CD4-positive, alpha-beta memory T cell (primary cell): ENCODE measurements at regions of chr5 and their contacts with region 1.

Region 1: DNA sequence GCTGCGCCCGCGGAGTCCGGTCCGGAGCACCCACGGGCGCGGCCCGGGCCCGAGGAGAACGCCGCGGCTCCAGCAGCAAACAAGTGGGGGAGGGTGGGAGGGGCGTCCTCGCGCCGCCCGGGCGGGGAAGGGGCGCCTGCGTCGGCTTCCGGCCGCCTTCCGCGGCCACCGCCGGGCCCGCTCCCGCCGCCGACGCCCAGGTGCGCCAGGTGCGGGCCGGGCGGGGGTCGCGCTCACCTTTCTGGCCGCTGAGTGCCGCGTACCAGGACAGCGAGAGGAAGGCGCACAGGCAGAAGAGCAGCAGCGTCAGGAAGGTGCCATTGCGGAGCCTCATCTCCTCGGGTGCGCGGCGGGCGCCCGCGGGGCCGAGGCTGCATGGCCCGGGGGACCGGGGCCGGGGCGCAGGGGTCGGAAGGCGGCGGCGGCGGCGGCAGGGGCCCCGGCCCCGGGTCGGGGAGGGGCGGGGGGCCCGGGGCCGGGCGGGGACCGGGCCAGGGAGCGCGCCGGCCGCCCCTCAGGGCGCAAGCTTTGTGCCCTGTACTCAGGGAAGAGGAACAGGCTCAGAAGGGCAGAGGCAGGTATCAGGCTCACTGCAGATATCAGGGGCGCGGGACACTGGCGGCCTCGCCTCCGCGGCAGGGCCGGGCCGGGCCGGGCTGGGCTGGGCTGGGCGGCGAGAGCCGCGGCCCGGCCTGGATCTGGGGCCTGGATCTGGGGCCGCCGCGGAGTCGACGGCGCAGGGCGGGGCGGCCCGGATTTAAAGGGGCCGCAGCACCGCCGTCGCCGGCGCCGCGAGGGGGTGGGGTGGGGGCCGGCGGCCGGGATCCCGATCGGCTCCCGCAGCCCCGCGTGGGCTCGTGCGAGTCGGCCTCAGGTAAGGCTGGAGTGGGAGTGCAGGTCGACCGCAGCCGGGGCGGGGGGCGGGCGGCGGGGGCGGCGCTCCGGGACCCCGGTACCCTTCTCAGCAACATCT is at the start of gene MGAT4B:
- DNase-seq: peak; percentile 59 to 68 (median 63)
- H3K4me3 ChIP-seq: peak within 1 kb of the TSS; percentile 11 to 55
- H3K4me3 Mint-ChIP-seq: peak within 1 kb of the TSS; percentile 71 to 87 (median 78)
- H3K27ac ChIP-seq: peak within 1 kb of the TSS; percentile 61
- H3K27ac Mint-ChIP-seq: peak within 1 kb of the TSS in 3 of 7 donors; percentile 59 to 73 (median 60)
- H3K4me1 ChIP-seq: peaks cover 40% of the 10 kb centered on the region
- H3K4me1 Mint-ChIP-seq: peaks cover 14 to 41% (median 30%) of the 10 kb centered on the region in 4 donors
- H3K27me3 ChIP-seq: no peaks in the 10 kb centered on the region
- H3K27me3 Mint-ChIP-seq: no peaks in the 10 kb centered on the region
- total RNA-seq, gene MGAT4B: 119 to 121 TPM

Region 2: DNA sequence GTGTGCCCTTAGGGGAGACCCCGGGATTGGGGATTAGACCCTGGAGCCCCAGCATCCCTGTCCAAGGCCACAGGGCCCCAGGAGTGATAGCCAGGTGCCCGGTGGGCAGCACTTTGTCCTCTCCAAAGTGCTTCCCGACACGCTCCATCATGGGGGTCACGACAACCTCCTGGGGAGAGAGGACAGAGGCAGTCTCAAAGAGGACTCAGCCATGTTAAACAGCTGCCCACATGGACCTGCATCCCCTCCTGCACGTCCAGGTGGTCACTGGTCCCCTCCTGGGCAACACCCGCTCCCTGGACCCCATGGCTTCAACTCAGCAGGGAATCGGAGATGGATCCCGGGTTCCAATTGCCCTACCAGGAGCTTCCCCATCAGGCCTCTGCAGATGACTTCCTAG is 163.0 kb before region 1 on chr5:
- CTCF ChIA-PET with region 1: no interaction called
- POLR2A ChIA-PET with region 1: no interaction called
- intact Hi-C with region 1: no loop called
- DNase-seq: no peak
- H3K4me3 ChIP-seq: no peak overlapping the region
- H3K4me3 Mint-ChIP-seq: no peak overlapping the region
- H3K27ac ChIP-seq: no peak overlapping the region
- H3K27ac Mint-ChIP-seq: no peak overlapping the region
- H3K4me1 ChIP-seq: no peaks in the 10 kb centered on the region
- H3K4me1 Mint-ChIP-seq: no peaks in the 10 kb centered on the region
- H3K27me3 ChIP-seq: no peaks in the 10 kb centered on the region
- H3K27me3 Mint-ChIP-seq: peaks cover 0 to 3% of the 10 kb centered on the region in 2 donors

Region 3: GRCh38 chr5:179732417-179732917 is 74.1 kb before region 1 on chr5 and contains the start of gene MAML1:
- CTCF ChIA-PET with region 1: interaction called, 5 read pairs
- POLR2A ChIA-PET with region 1: interaction called, 11 read pairs
- intact Hi-C with region 1: no loop called
- DNase-seq: peak; percentile 99 to 100 (median 99)
- H3K4me3 ChIP-seq: peak within 1 kb of the TSS; percentile 53 to 62
- H3K4me3 Mint-ChIP-seq: peak within 1 kb of the TSS; percentile 92 to 97 (median 95)
- H3K27ac ChIP-seq: peak within 1 kb of the TSS; percentile 96
- H3K27ac Mint-ChIP-seq: peak within 1 kb of the TSS; percentile 92 to 99 (median 96)
- H3K4me1 ChIP-seq: peaks cover 44% of the 10 kb centered on the region
- H3K4me1 Mint-ChIP-seq: peaks cover 25 to 51% (median 37%) of the 10 kb centered on the region in 4 donors
- H3K27me3 ChIP-seq: no peaks in the 10 kb centered on the region
- H3K27me3 Mint-ChIP-seq: no peaks in the 10 kb centered on the region
- total RNA-seq, gene MAML1: 52.4 to 56.5 TPM

Region 4: DNA sequence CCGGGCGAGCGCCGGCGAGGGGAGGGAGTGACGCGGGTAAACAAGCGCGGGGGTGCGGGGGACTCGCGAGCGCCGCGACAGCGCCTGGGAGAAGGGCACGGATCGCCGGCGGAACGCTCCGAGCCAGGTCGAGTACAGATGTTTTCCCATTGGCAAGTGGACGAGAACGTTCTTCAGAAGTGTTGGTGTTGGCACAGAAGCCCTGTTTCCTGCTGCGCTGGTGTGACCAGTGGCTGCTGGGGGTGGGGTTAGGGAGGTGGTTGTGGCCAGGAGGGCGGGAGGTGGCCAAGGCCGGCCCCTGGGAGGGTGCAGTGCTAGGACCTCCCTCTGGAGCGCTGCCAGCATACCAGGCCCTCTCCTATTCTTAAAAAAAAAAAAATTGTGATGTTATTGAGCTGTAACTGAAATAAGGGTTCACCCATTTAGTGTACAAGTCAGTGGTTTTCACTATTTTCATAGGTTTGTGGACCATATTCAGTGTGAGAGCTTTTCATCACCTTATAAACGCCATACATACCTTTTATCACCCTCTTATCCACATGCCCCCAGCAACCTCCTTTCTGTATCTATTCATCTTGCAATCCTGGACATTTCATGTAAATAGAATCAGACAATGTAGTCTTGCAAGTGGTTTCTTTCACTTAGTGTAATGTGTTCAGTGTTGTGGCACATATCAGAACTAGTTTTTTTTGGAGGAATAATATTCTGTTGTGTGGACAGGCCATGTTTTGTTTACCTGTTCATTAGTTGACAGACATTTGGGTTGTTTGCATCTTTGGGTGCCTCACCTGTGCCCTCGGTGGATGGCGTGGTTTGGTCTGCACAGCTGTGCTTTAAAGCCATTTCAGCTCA is 15.3 kb after region 1 on chr5:
- CTCF ChIA-PET with region 1: interaction called, 15 read pairs
- POLR2A ChIA-PET with region 1: interaction called, 159 read pairs
- intact Hi-C with region 1: loop called (anchors 1 kb)
- DNase-seq: peak; percentile 89 to 92 (median 90)
- H3K4me3 ChIP-seq: peak overlapping the region; percentile 50 to 83
- H3K4me3 Mint-ChIP-seq: peak overlapping the region; percentile 93 to 98 (median 96)
- H3K27ac ChIP-seq: peak overlapping the region; percentile 99
- H3K27ac Mint-ChIP-seq: peak overlapping the region; percentile 96 to 99 (median 97)
- H3K4me1 ChIP-seq: peaks cover 52% of the 10 kb centered on the region
- H3K4me1 Mint-ChIP-seq: peaks cover 28 to 76% (median 46%) of the 10 kb centered on the region in 4 donors
- H3K27me3 ChIP-seq: no peaks in the 10 kb centered on the region
- H3K27me3 Mint-ChIP-seq: peaks cover 0 to 1% of the 10 kb centered on the region in 2 donors

Region 5: GRCh38 chr5:179858586-179859427 is 52.3 kb after region 1 on chr5 and contains the start of gene MRNIP:
- CTCF ChIA-PET with region 1: interaction called, 11 read pairs
- POLR2A ChIA-PET with region 1: interaction called, 9 read pairs
- intact Hi-C with region 1: loop called (anchors 1 kb)
- DNase-seq: peak; percentile 83 to 90 (median 86)
- H3K4me3 ChIP-seq: peak within 1 kb of the TSS; percentile 95 to 96
- H3K4me3 Mint-ChIP-seq: peak within 1 kb of the TSS; percentile 94 to 98 (median 97)
- H3K27ac ChIP-seq: peak within 1 kb of the TSS; percentile 66
- H3K27ac Mint-ChIP-seq: peak within 1 kb of the TSS; percentile 87 to 94 (median 92)
- H3K4me1 ChIP-seq: peaks cover 12% of the 10 kb centered on the region
- H3K4me1 Mint-ChIP-seq: peaks cover 7 to 30% (median 12%) of the 10 kb centered on the region in 4 donors
- H3K27me3 ChIP-seq: no peaks in the 10 kb centered on the region
- H3K27me3 Mint-ChIP-seq: no peaks in the 10 kb centered on the region
- total RNA-seq, gene MRNIP: 125 to 129 TPM

Region 6: GRCh38 chr5:179974946-179975712 is 168.6 kb after region 1 on chr5:
- CTCF ChIA-PET with region 1: interaction called, 5 read pairs
- POLR2A ChIA-PET with region 1: no interaction called
- intact Hi-C with region 1: loop called (anchors 10 kb)
- DNase-seq: peak in 4 of 5 donors; percentile 3 to 17 (median 14)
- H3K4me3 ChIP-seq: no peak overlapping the region
- H3K4me3 Mint-ChIP-seq: no peak overlapping the region
- H3K27ac ChIP-seq: no peak overlapping the region
- H3K27ac Mint-ChIP-seq: no peak overlapping the region
- H3K4me1 ChIP-seq: no peaks in the 10 kb centered on the region
- H3K4me1 Mint-ChIP-seq: peaks cover 0 to 4% (median 3%) of the 10 kb centered on the region in 4 donors
- H3K27me3 ChIP-seq: no peaks in the 10 kb centered on the region
- H3K27me3 Mint-ChIP-seq: no peaks in the 10 kb centered on the region

Region 7: DNA sequence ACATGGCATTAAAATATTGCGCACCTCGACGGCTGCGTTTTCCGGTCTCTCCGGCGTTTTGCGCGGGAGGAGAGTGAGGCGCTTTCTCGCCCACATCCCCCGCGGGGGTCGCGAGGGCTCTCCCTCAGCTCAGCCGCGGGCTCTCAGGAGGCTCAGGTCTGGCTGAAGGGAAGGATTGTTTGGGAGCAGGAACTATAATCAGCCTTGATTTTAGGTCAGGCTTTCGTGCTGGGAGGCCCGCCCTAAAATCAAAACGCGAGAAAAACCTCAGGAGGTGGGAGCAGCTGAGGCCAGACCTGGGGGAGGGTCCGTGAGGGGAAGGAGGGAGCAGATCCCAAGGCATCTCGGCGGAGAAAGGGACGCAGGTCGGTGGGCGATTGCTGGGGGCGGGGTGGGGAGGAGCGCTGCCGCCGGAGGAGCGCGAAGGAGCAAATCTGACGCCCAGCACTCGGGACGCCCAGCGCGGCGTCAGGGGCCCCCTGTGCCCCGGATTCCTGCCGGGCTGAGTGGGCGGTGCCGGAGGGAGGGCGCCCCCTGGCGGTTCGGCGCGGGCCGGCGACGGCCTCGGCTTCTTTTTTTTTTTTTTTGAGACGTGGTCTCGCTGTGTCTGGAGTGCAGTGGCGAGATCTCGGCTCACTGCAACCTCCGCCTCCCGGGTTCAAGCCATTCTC is 283.7 kb after region 1 on chr5:
- CTCF ChIA-PET with region 1: interaction called, 7 read pairs
- POLR2A ChIA-PET with region 1: no interaction called
- intact Hi-C with region 1: loop called (anchors 1 kb)
- DNase-seq: peak; percentile 69 to 85 (median 81)
- H3K4me3 ChIP-seq: peak overlapping the region; percentile 48 to 52
- H3K4me3 Mint-ChIP-seq: peak overlapping the region; percentile 74 to 90 (median 87)
- H3K27ac ChIP-seq: peak overlapping the region; percentile 49
- H3K27ac Mint-ChIP-seq: peak overlapping the region; percentile 69 to 91 (median 80)
- H3K4me1 ChIP-seq: peaks cover 13% of the 10 kb centered on the region
- H3K4me1 Mint-ChIP-seq: peaks cover 11 to 29% (median 16%) of the 10 kb centered on the region in 4 donors
- H3K27me3 ChIP-seq: no peaks in the 10 kb centered on the region
- H3K27me3 Mint-ChIP-seq: peaks cover 1 to 5% of the 10 kb centered on the region in 2 donors